ENCODE measurements at regions of chr3 and their contacts with region 1.

Region 1: DNA sequence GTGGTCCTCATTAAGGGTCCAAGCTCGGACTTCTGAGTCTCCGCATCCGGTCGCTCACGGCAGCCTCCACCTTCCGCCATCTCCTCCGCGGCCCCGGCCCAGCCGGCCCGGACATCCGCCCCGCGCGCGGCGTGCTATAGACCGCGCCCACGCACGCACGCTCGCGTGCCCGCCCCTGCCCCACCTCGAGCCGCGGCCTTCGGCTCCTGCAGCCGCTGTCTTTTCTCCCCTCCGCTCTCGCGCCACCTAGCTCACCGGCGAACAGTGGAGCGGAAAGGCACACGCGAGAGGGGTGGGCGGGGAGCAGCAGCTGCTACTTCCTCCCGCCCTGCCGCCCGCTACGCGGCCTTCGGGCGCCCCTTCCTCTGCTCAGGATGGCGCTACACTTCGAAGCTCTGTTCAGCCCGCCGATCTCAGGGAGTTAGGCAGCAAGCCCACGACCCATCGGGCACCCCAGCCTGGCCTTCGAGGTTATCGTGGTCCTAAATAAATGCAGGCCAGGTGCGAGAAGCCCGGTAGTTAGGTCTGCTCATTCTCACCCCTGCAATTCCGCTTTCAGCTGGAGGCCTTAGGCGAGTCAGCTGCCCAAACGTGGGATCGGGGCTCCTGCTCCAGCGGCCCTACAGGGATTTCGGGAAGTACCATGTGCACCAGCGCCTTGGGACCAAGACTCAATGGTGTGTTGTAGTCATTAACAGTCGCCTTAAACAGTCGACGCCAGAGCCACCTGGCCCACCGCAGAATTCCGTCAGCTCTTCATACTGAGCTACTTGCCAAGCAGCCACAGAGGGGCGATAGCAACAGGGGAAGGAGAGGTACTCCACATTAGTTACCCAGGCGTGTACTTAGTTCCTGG is at the start of gene USP4:
- DNase-seq: peak; percentile 95
- ATAC-seq: peak; percentile 93
- H3K4me3 Mint-ChIP-seq: peak within 1 kb of the TSS; percentile 97
- H3K27ac Mint-ChIP-seq: peak within 1 kb of the TSS; percentile 100
- H3K4me1 Mint-ChIP-seq: peaks cover 47% of the 10 kb centered on the region
- H3K27me3 Mint-ChIP-seq: no peaks in the 10 kb centered on the region
- total RNA-seq, gene USP4: 72.1 to 74.0 TPM

Region 2: GRCh38 chr3:49093853-49094767 is 246.1 kb before region 1 on chr3 and contains the start of gene QRICH1:
- CTCF ChIA-PET with region 1: interaction called, 4 read pairs
- POLR2A ChIA-PET with region 1: interaction called, 17 read pairs
- DNase-seq: peak; percentile 98
- ATAC-seq: peak; percentile 86
- H3K4me3 Mint-ChIP-seq: peak within 1 kb of the TSS; percentile 93
- H3K27ac Mint-ChIP-seq: peak within 1 kb of the TSS; percentile 99
- H3K4me1 Mint-ChIP-seq: peaks cover 27% of the 10 kb centered on the region
- H3K27me3 Mint-ChIP-seq: no peaks in the 10 kb centered on the region
- total RNA-seq, gene QRICH1: 130 to 131 TPM

Region 3: DNA sequence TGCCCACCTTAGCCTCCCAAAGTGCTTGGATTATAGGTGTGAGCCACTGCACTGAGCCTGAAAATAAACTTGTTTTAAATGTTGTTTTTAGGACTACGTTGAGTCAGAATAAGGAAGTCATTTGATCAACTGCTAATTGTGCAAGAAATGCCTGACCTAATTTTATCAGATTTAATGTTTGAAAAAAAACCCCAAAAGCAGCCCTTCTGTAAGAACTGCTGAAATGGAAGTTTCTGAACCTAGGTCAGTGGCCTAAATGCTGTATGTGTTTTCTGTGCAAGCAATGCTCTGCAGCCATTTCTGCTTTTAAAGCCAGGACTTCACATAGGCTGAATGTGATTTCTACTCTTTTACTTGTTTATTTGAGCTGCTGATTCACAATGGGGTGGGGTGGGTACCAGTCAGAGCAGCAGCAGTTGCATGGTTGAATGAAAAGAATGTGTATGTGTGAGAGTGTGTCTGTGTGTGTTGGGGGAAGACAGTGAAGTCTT is 11.4 kb after region 1 on chr3:
- CTCF ChIA-PET with region 1: interaction called, 53 read pairs
- POLR2A ChIA-PET with region 1: interaction called, 9 read pairs
- DNase-seq: no peak
- ATAC-seq: no peak
- H3K4me3 Mint-ChIP-seq: no peak overlapping the region
- H3K27ac Mint-ChIP-seq: peak overlapping the region; percentile 3
- H3K4me1 Mint-ChIP-seq: peaks cover 14% of the 10 kb centered on the region
- H3K27me3 Mint-ChIP-seq: no peaks in the 10 kb centered on the region

Region 4: GRCh38 chr3:49406571-49407566 is 66.7 kb after region 1 on chr3:
- CTCF ChIA-PET with region 1: interaction called, 21 read pairs
- POLR2A ChIA-PET with region 1: interaction called, 51 read pairs
- DNase-seq: no peak
- ATAC-seq: no peak
- H3K4me3 Mint-ChIP-seq: no peak overlapping the region
- H3K27ac Mint-ChIP-seq: peak overlapping the region; percentile 76
- H3K4me1 Mint-ChIP-seq: peaks cover 42% of the 10 kb centered on the region
- H3K27me3 Mint-ChIP-seq: no peaks in the 10 kb centered on the region

Region 5: DNA sequence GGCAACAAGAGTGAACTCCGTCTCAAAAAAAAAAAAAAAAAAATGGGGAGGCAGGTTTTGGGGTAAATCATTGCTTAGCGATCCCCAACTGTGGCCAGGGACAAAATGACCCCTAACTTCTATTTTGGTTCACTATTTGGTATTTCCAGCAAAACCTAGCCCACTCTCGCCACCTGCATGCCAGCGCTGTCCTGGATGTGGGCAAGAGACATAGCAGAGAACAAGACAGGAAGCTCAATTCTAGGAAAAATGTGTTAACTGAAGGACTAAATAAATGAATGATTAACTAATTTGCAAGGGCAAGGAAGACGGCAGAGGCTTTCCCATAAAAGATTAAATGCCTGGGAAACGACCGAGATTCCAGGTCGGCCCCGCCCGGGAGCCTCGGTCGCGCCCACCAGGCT is 88.5 kb after region 1 on chr3:
- CTCF ChIA-PET with region 1: interaction called, 26 read pairs
- POLR2A ChIA-PET with region 1: interaction called, 4 read pairs
- DNase-seq: no peak
- ATAC-seq: peak; percentile 6
- H3K4me3 Mint-ChIP-seq: peak overlapping the region; percentile 90
- H3K27ac Mint-ChIP-seq: peak overlapping the region; percentile 93
- H3K4me1 Mint-ChIP-seq: peaks cover 37% of the 10 kb centered on the region
- H3K27me3 Mint-ChIP-seq: no peaks in the 10 kb centered on the region

Region 6: GRCh38 chr3:49454458-49454857 is 114.3 kb after region 1 on chr3:
- CTCF ChIA-PET with region 1: interaction called, 50 read pairs
- POLR2A ChIA-PET with region 1: interaction called, 5 read pairs
- DNase-seq: no peak
- ATAC-seq: no peak
- H3K4me3 Mint-ChIP-seq: no peak overlapping the region
- H3K27ac Mint-ChIP-seq: no peak overlapping the region
- H3K4me1 Mint-ChIP-seq: peaks cover 3% of the 10 kb centered on the region
- H3K27me3 Mint-ChIP-seq: no peaks in the 10 kb centered on the region

Region 7: GRCh38 chr3:50126287-50127211 is 786.4 kb after region 1 on chr3:
- CTCF ChIA-PET with region 1: no interaction called
- POLR2A ChIA-PET with region 1: no interaction called
- DNase-seq: no peak
- ATAC-seq: no peak
- H3K4me3 Mint-ChIP-seq: no peak overlapping the region
- H3K27ac Mint-ChIP-seq: peak overlapping the region; percentile 25
- H3K4me1 Mint-ChIP-seq: no peaks in the 10 kb centered on the region
- H3K27me3 Mint-ChIP-seq: no peaks in the 10 kb centered on the region

Measured in activated CD8-positive, alpha-beta T cell treated with anti-CD3 and anti-CD28 coated beads, Interleukin-2, amount 10 ng/mL, durations not matched to agents 7 days and 5 days (primary cell).